ENCODE measurements at regions of chr6 and their contacts with region 1.

Region 1: DNA sequence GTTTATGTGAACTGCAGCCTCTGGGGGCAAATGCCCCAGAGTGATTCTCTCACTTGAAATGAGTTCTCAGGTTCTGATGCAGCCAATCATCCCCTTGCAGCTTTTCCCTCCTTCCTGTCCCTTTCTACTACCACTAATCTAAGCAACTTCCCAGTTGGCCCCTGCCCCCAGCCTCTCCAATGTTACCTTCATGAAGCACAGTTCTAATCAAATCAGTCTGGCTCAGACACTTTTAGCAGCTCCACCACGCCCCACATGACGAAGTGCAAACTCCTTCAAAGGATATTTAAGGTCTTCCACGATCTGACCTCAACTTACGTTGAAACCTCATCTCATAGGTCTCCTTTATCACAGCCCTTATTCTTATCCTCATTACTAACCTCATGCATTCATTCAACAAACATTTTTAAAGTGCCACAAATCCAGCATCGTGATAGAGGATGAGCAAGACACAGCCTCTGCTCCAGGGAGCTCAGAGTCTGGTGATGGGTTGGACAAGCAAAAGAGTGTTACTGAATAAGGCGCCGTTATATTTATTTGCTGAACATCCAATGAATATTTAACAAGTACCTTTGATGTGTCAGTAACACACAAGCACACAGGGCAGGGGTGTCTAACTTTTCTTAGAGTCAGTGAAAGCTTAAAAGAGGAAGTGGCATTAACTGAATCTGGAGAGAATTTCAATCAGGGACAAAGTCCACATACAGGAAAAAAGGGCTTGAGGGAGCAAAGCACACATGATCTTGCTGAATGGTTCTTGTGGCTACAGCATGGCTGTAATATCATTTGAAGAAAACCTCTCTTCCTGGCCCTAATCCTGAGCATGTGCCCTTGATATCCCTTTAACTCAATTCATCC is 20.4 kb upstream of the DTNBP1 start:
- DNase-seq: no peak
- H3K4me3 ChIP-seq: no peak overlapping the region
- H3K27ac ChIP-seq: no peak overlapping the region
- H3K4me1 ChIP-seq: no peaks in the 10 kb centered on the region
- H3K27me3 ChIP-seq: peaks cover 39% of the 10 kb centered on the region

Region 2: GRCh38 chr6:16183187-16183664 is 500.0 kb after region 1 on chr6:
- in situ Hi-C with region 1: loop called (anchors 10 kb)
- DNase-seq: peak; percentile 70
- H3K4me3 ChIP-seq: peak overlapping the region; percentile 56
- H3K27ac ChIP-seq: no peak overlapping the region
- H3K4me1 ChIP-seq: peaks cover 6% of the 10 kb centered on the region
- H3K27me3 ChIP-seq: peaks cover 37% of the 10 kb centered on the region